A549 (cell line): ENCODE measurements at regions of chr12 and their contacts with region 1.

Region 1: GRCh38 chr12:12654691-12655460 is 41.1 kb downstream of the GPR19 start:
- DNase-seq: no peak
- ATAC-seq: no peak
- H3K4me3 ChIP-seq: no peak overlapping the region
- H3K27ac ChIP-seq: no peak overlapping the region
- H3K4me1 ChIP-seq: peaks cover 4% of the 10 kb centered on the region; the same call in 2 of the 3 replicates
- CTCF ChIP-seq: no peak
- EP300 ChIP-seq: no peak
- POLR2A ChIP-seq: no peak
- RAD21 ChIP-seq: no peak

Region 2: GRCh38 chr12:12384571-12385340 is 270.1 kb before region 1 on chr12:
- CTCF ChIA-PET with region 1: interaction called, 18 read pairs
- POLR2A ChIA-PET with region 1: no interaction called
- DNase-seq: no peak
- ATAC-seq: no peak; a peak in 1 of 6 replicates
- H3K4me3 ChIP-seq: no peak overlapping the region
- H3K27ac ChIP-seq: peak overlapping the region in 1 of 2 experiments; percentile 25; a peak in 2 of 6 replicates
- H3K4me1 ChIP-seq: peaks cover 18% of the 10 kb centered on the region
- CTCF ChIP-seq: no peak
- EP300 ChIP-seq: no peak
- POLR2A ChIP-seq: no peak
- RAD21 ChIP-seq: no peak

Region 3: DNA sequence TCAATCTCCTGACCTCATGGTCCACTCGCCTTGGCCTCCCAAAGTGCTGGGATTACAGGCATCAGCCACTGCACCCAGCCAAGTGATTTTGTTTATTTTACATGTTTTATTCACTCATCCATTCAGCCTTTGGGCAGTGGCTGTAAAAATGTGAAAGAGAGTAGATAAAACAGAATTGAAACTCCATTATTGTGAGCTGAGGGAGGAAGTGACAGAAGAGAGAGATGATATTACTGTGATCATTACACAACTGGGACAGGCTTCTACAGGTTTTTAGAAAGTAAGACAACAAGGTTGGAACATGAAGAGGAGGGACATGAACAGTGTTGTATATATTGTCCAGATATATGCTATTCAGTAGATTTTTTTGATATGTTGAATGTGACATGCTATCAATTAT is 18.2 kb before region 1 on chr12:
- CTCF ChIA-PET with region 1: interaction called, 13 read pairs
- POLR2A ChIA-PET with region 1: no interaction called
- DNase-seq: no peak
- ATAC-seq: no peak
- H3K4me3 ChIP-seq: no peak overlapping the region
- H3K27ac ChIP-seq: no peak overlapping the region
- H3K4me1 ChIP-seq: no peaks in the 10 kb centered on the region
- CTCF ChIP-seq: no peak
- EP300 ChIP-seq: no peak
- POLR2A ChIP-seq: no peak
- RAD21 ChIP-seq: no peak

Region 4: GRCh38 chr12:12671850-12672660 is 17.2 kb after region 1 on chr12:
- CTCF ChIA-PET with region 1: interaction called, 39 read pairs
- POLR2A ChIA-PET with region 1: no interaction called
- DNase-seq: no peak
- ATAC-seq: no peak
- H3K4me3 ChIP-seq: no peak overlapping the region
- H3K27ac ChIP-seq: peak overlapping the region in 1 of 2 experiments; percentile 9; a peak in 1 of 6 replicates
- H3K4me1 ChIP-seq: peaks cover 53% of the 10 kb centered on the region
- CTCF ChIP-seq: no peak
- EP300 ChIP-seq: no peak
- POLR2A ChIP-seq: no peak
- RAD21 ChIP-seq: no peak

Region 5: GRCh38 chr12:12745576-12746211 is 90.8 kb after region 1 on chr12:
- CTCF ChIA-PET with region 1: no interaction called
- POLR2A ChIA-PET with region 1: no interaction called
- DNase-seq: no peak
- ATAC-seq: peak in 1 of 2 experiments; percentile 38; a peak in 3 of 6 replicates
- H3K4me3 ChIP-seq: no peak overlapping the region
- H3K27ac ChIP-seq: no peak overlapping the region
- H3K4me1 ChIP-seq: peaks cover 7% of the 10 kb centered on the region; the same call in 1 of the 3 replicates
- CTCF ChIP-seq: no peak
- EP300 ChIP-seq: no peak
- POLR2A ChIP-seq: no peak
- RAD21 ChIP-seq: no peak